Calu3 (cell line): ENCODE measurements at regions of chr11 and their contacts with region 1.

Region 1: DNA sequence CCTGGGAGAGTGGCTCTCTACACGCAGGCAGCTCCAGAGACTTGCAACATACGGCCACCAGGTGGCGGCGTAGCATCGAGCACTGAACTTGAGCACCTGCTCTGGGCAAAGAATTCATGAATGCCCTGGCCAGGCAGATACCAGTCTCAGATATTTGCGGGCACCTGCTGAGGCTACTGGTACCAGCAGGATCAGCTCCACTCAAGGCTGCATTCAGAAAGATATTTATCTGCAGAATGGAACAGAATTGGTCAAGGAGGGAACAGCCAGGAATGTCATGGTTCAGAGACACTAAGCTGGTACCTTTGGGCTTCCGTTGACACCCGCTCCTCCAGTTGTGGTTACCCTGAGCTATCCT is 10.8 kb upstream of the CCDC86 start:
- DNase-seq: peak; percentile 84
- H3K4me3 Mint-ChIP-seq: no peak overlapping the region
- H3K27ac Mint-ChIP-seq: no peak overlapping the region
- H3K4me1 Mint-ChIP-seq: no peaks in the 10 kb centered on the region
- H3K27me3 Mint-ChIP-seq: peaks cover 61% of the 10 kb centered on the region
- CTCF ChIP-seq: peak; percentile 84

Region 2: GRCh38 chr11:60775420-60775961 is 55.6 kb before region 1 on chr11:
- CTCF ChIA-PET with region 1: interaction called, 6 read pairs
- intact Hi-C with region 1: loop called (anchors 2 kb)
- DNase-seq: peak; percentile 89
- H3K4me3 Mint-ChIP-seq: no peak overlapping the region
- H3K27ac Mint-ChIP-seq: no peak overlapping the region
- H3K4me1 Mint-ChIP-seq: peaks cover 11% of the 10 kb centered on the region
- H3K27me3 Mint-ChIP-seq: peaks cover 44% of the 10 kb centered on the region
- CTCF ChIP-seq: peak; percentile 91

Region 3: GRCh38 chr11:60887556-60887955 is 56.4 kb after region 1 on chr11:
- CTCF ChIA-PET with region 1: interaction called, 54 read pairs
- intact Hi-C with region 1: loop called (anchors 1 kb)
- DNase-seq: peak; percentile 47
- H3K4me3 Mint-ChIP-seq: no peak overlapping the region
- H3K27ac Mint-ChIP-seq: no peak overlapping the region
- H3K4me1 Mint-ChIP-seq: no peaks in the 10 kb centered on the region
- H3K27me3 Mint-ChIP-seq: no peaks in the 10 kb centered on the region
- CTCF ChIP-seq: peak; percentile 30

Region 4: DNA sequence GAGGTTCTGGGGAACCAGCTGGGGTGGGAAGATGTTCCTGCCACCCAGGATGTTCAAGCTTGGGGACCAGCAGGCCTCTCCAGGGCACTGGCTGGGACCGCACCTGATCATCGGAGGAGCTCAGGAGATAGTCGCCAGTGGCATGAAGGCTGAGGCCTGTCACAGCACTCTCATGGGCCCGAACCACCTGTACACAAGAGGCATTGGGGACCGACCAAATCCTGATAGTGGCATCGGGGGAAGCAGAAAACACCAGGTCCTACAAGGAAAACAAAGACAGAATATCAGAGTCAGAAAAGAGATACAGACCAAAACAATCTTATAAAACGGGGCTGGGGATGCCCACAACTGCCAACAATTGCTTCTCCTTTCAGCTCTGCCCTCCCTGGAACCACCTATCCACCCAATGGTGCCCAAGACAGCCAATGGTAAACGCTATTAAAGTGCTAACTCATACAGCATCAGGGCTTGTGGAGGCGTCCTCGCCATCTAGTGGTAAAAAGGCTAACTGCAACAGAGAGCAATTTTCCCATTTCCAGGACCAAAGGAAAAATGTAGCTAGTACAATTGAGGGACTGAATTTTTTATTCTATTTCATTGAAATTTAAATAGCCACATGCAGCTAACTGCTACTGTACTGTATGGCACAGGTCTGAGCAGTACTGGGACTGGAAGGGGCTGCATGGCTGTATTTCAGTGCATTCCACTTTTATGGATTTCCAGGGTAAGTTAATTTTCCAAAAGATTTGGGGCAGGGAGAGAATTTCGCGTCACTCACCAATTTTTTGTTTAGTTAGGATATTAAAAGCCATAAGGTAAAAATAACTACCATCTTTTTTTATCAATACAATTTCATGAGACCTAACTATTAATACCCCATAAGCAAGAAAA is 68.2 kb after region 1 on chr11:
- CTCF ChIA-PET with region 1: interaction called, 14 read pairs
- intact Hi-C with region 1: loop called (anchors 2 kb)
- DNase-seq: peak; percentile 58
- H3K4me3 Mint-ChIP-seq: no peak overlapping the region
- H3K27ac Mint-ChIP-seq: no peak overlapping the region
- H3K4me1 Mint-ChIP-seq: peaks cover 9% of the 10 kb centered on the region
- H3K27me3 Mint-ChIP-seq: no peaks in the 10 kb centered on the region
- CTCF ChIP-seq: peak; percentile 72

Region 5: GRCh38 chr11:61173456-61173855 is 342.3 kb after region 1 on chr11:
- CTCF ChIA-PET with region 1: no interaction called
- intact Hi-C with region 1: loop called (anchors 5 kb)
- DNase-seq: peak; percentile 36
- H3K4me3 Mint-ChIP-seq: no peak overlapping the region
- H3K27ac Mint-ChIP-seq: no peak overlapping the region
- H3K4me1 Mint-ChIP-seq: peaks cover 16% of the 10 kb centered on the region
- H3K27me3 Mint-ChIP-seq: peaks cover 55% of the 10 kb centered on the region
- CTCF ChIP-seq: no peak

Region 6: DNA sequence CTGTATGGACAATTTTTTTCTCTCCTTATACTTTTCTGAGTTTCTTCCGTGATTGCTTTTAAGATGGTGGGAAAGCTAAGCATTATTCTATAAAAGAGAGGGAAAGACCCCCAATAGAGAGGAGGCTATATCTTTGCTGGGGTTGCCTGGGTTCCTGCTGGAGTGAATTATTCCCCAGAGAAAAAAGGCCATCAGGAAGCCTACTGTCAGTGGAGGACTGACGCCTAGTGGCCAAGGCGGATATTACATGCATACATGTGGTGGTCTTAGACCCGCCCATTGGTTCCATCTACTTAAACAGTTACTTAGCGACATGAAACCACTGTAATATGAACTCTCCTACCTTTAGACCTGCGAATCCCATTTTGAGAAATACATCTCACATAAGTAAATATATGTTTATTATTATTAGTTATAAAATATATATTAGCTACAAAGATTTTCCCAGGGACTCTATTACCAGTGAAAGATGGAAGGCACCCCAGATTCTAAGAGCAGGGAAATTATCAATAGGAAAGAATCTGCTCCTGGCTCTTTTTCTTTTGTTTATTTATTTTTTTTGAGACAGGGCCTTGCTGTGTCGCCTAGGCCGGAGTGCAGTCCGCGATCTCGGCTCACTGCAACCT is 356.5 kb after region 1 on chr11:
- CTCF ChIA-PET with region 1: interaction called, 3 read pairs
- intact Hi-C with region 1: loop called (anchors 5 kb)
- DNase-seq: peak; percentile 78
- H3K4me3 Mint-ChIP-seq: no peak overlapping the region
- H3K27ac Mint-ChIP-seq: no peak overlapping the region
- H3K4me1 Mint-ChIP-seq: no peaks in the 10 kb centered on the region
- H3K27me3 Mint-ChIP-seq: peaks cover 14% of the 10 kb centered on the region
- CTCF ChIP-seq: peak; percentile 91